Endothelial cell of umbilical vein (primary cell): ENCODE measurements at regions of chr1 and their contacts with region 1.

Region 1: GRCh38 chr1:60621368-60621851 is 461.0 kb upstream of the NFIA start:
- DNase-seq: peak; percentile 90
- H3K4me3 ChIP-seq: no peak overlapping the region
- H3K27ac ChIP-seq: peak overlapping the region; percentile 46
- H3K4me1 ChIP-seq: peaks cover 29% of the 10 kb centered on the region
- H3K27me3 ChIP-seq: no peaks in the 10 kb centered on the region
- CTCF ChIP-seq: no peak
- POLR2A ChIP-seq: no peak

Region 2: DNA sequence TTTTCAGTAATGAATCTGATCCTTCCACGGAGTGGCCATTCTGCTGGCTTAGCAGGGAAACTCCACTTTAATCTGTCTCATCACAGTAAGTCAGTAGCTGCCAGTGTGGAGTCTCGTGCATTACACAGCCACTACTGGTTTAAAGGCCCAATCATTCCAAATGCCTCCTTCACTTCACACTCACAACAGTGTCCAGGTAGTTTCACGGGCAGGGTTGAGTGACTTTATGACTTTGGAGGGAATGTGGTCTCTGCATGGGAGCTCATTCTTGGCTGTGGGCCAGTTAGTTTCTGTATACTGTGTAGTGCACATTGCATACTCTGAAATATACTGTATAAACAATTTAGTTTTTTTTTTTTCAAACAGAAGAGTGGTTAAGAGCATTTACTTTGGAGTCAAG is 513.2 kb before region 1 on chr1:
- CTCF ChIA-PET with region 1: no interaction called
- POLR2A ChIA-PET with region 1: no interaction called
- dilution Hi-C with region 1: no loop called
- intact Hi-C with region 1: no loop called
- DNase-seq: no peak
- H3K4me3 ChIP-seq: no peak overlapping the region
- H3K27ac ChIP-seq: no peak overlapping the region
- H3K4me1 ChIP-seq: no peaks in the 10 kb centered on the region
- H3K27me3 ChIP-seq: no peaks in the 10 kb centered on the region
- CTCF ChIP-seq: no peak
- POLR2A ChIP-seq: no peak

Region 3: DNA sequence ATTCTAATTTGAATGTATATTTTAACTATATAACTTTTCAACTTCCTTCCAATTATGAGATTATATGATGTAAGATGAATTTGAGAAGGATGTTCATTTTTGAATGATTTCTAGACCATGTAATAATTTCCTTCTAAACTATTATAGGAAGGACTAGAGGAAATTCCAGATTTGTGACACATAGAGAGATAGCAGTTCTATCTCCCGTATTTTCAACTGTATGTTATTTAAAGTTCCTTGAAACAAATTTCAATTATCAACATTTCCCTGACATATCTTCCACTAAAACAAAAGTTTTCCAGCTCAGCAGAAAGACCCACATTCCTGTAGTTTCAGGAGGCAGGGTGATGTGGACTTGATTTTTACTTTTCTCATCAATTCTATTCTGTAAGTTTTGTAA is 151.2 kb before region 1 on chr1:
- CTCF ChIA-PET with region 1: no interaction called
- POLR2A ChIA-PET with region 1: no interaction called
- dilution Hi-C with region 1: no loop called
- intact Hi-C with region 1: loop called (anchors 1 kb)
- DNase-seq: peak; percentile 66
- H3K4me3 ChIP-seq: no peak overlapping the region
- H3K27ac ChIP-seq: peak overlapping the region; percentile 82
- H3K4me1 ChIP-seq: peaks cover 27% of the 10 kb centered on the region
- H3K27me3 ChIP-seq: no peaks in the 10 kb centered on the region
- CTCF ChIP-seq: no peak
- POLR2A ChIP-seq: no peak

Region 4: GRCh38 chr1:60510162-60510561 is 111.2 kb before region 1 on chr1:
- CTCF ChIA-PET with region 1: no interaction called
- POLR2A ChIA-PET with region 1: no interaction called
- dilution Hi-C with region 1: no loop called
- intact Hi-C with region 1: loop called (anchors 1 kb)
- DNase-seq: peak; percentile 89
- H3K4me3 ChIP-seq: no peak overlapping the region
- H3K27ac ChIP-seq: peak overlapping the region; percentile 13
- H3K4me1 ChIP-seq: peaks cover 28% of the 10 kb centered on the region
- H3K27me3 ChIP-seq: no peaks in the 10 kb centered on the region
- CTCF ChIP-seq: no peak
- POLR2A ChIP-seq: peak; percentile 79

Region 5: DNA sequence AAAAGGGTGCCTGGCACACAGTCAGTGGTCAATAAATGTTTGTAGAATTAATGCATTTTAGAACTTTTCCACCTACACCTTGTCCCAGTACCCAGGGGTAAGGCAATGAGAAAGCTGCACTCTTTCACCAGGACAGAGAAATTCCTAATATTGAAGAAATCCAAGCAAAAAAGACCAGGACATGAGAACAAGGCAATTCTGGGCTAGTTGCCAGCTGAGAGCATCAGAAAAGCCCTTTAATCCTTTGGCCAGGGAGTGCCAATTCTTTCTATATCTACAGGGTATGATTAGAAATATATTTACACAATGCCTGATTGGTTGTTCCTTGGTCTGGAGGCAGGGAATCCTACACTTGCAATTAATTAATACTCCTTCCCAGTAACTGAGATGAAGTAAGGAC is 31.5 kb before region 1 on chr1:
- CTCF ChIA-PET with region 1: no interaction called
- POLR2A ChIA-PET with region 1: no interaction called
- dilution Hi-C with region 1: no loop called
- intact Hi-C with region 1: loop called (anchors 5 kb)
- DNase-seq: peak; percentile 32
- H3K4me3 ChIP-seq: no peak overlapping the region
- H3K27ac ChIP-seq: no peak overlapping the region
- H3K4me1 ChIP-seq: peaks cover 14% of the 10 kb centered on the region
- H3K27me3 ChIP-seq: no peaks in the 10 kb centered on the region
- CTCF ChIP-seq: no peak
- POLR2A ChIP-seq: no peak

Region 6: GRCh38 chr1:60596791-60597747 is 24.3 kb before region 1 on chr1:
- CTCF ChIA-PET with region 1: interaction called, 6 read pairs
- POLR2A ChIA-PET with region 1: no interaction called
- dilution Hi-C with region 1: no loop called
- intact Hi-C with region 1: loop called (anchors 1 kb)
- DNase-seq: peak; percentile 57
- H3K4me3 ChIP-seq: no peak overlapping the region
- H3K27ac ChIP-seq: peak overlapping the region; percentile 61
- H3K4me1 ChIP-seq: peaks cover 22% of the 10 kb centered on the region
- H3K27me3 ChIP-seq: no peaks in the 10 kb centered on the region
- CTCF ChIP-seq: peak in 1 of 2 donors; percentile 3
- POLR2A ChIP-seq: no peak